Stomach (tissue), 19 donors: ENCODE measurements at regions of chrX and their contacts with region 1.

Region 1: GRCh38 chrX:53294024-53294648 is 12.8 kb upstream of the IQSEC2 start:
- DNase-seq: no peak
- H3K4me3 ChIP-seq: no peak overlapping the region
- H3K27ac ChIP-seq: no peak overlapping the region
- H3K4me1 ChIP-seq: no peaks in the 10 kb centered on the region
- H3K27me3 ChIP-seq: peaks cover 0 to 16% (median 0%) of the 10 kb centered on the region in 3 donors
- CTCF ChIP-seq: no peak
- EP300 ChIP-seq: no peak
- POLR2A ChIP-seq: no peak

Region 2: GRCh38 chrX:53441531-53442321 is 147.6 kb after region 1 on chrX:
- intact Hi-C with region 1: loop called (anchors 10 kb)
- DNase-seq: peak; percentile 84 to 86
- H3K4me3 ChIP-seq: peak overlapping the region; percentile 32 to 41 (median 37)
- H3K27ac ChIP-seq: peak overlapping the region in 4 of 5 donors; percentile 47 to 77 (median 59)
- H3K4me1 ChIP-seq: peaks cover 0 to 19% (median 13%) of the 10 kb centered on the region in 4 donors
- H3K27me3 ChIP-seq: peaks cover 0 to 19% (median 0%) of the 10 kb centered on the region in 3 donors
- CTCF ChIP-seq: no peak
- EP300 ChIP-seq: no peak
- POLR2A ChIP-seq: no peak